Heart left ventricle (tissue), 16 donors: ENCODE measurements at regions of chr9 and their contacts with region 1.

Region 1: GRCh38 chr9:121545875-121546423 is 46.3 kb upstream of the GGTA1 start:
- DNase-seq: peak; percentile 95 to 99 (median 98)
- ATAC-seq: peak; percentile 88 to 93 (median 92)
- H3K4me3 ChIP-seq: peak overlapping the region in 10 of 12 donors; percentile 15 to 48 (median 24)
- H3K27ac ChIP-seq: peak overlapping the region in 4 of 12 donors; percentile 32 to 62 (median 50)
- H3K4me1 ChIP-seq: peaks cover 0 to 25% (median 15%) of the 10 kb centered on the region in 12 donors
- H3K27me3 ChIP-seq: no peaks in the 10 kb centered on the region
- CTCF ChIP-seq: peak; percentile 91 to 98 (median 96)
- POLR2A ChIP-seq: peak in 1 of 2 donors; percentile 23

Region 2: GRCh38 chr9:120892748-120893610 is 653.0 kb before region 1 on chr9:
- intact Hi-C with region 1: no loop called
- DNase-seq: no peak
- ATAC-seq: no peak
- H3K4me3 ChIP-seq: no peak overlapping the region
- H3K27ac ChIP-seq: peak overlapping the region in 1 of 12 donors; percentile 78
- H3K4me1 ChIP-seq: peaks cover 3 to 43% (median 15%) of the 10 kb centered on the region in 12 donors
- H3K27me3 ChIP-seq: no peaks in the 10 kb centered on the region
- CTCF ChIP-seq: no peak
- POLR2A ChIP-seq: no peak

Region 3: DNA sequence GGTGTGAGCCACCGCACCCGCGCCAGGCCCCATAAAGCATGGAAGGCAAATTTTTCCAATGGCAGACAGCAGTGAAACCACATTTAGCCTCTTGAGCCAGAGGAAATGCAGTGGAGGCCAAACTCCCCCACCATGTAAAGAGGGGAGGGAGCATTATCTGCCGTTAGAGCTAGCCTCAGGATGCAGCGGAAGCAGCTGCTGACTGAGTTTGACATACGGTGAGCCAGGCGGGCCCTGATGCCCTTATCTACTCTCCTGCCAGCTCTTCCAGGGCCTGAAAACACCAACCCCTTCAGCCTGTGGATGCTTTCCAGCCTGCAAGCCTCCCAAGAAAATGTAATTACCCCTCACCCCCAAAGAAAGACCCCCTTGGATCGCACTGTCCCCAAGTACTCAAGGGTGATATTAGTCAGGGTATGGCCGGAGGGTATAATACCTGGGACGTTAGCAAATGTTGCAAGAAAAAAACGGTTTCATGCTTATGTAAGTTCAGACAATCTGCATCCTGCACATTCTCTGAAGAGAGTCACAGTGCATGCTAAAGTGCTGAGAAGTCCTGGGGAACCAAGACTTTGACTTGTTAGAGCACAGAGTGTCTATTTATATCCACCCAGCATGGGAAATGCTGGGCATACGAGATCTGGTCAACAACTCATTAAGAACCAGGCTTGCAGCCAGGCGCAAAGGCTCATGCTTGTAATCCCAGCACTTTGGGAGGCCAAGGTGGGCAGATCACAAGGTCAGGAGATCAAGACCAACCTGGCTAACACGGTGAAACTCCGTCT is 35.0 kb before region 1 on chr9:
- intact Hi-C with region 1: no loop called
- DNase-seq: peak in 3 of 5 donors; percentile 41 to 79 (median 54)
- ATAC-seq: peak; percentile 79 to 89 (median 88)
- H3K4me3 ChIP-seq: no peak overlapping the region
- H3K27ac ChIP-seq: peak overlapping the region in 11 of 12 donors; percentile 38 to 74 (median 59)
- H3K4me1 ChIP-seq: peaks cover 0 to 41% (median 12%) of the 10 kb centered on the region in 12 donors
- H3K27me3 ChIP-seq: no peaks in the 10 kb centered on the region
- CTCF ChIP-seq: no peak
- POLR2A ChIP-seq: no peak

Region 4: DNA sequence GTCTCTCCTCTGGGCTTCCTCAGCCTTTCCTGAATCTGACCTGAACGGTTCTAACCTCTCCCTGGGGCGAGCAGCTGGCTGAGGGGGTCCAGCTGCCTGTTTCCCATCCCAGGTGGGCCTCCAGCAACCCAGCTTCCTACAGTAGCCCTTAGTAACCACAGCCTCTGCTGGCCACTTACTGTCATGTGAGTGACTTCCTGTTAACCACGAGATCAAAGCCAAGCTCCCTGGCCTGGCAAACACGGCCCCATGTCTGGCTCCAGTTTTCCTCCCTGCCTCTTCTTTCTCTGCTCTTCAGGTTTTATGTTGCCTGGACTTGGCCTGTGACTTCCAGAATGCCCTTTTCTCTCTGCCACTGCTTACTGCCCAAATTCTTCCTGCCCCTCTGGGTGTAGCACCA is 58.3 kb after region 1 on chr9:
- intact Hi-C with region 1: loop called in 6 of 10 experiments (anchors 5 kb)
- DNase-seq: peak in 2 of 5 donors; percentile 44 to 55
- ATAC-seq: peak in 1 of 4 donors; percentile 35
- H3K4me3 ChIP-seq: no peak overlapping the region
- H3K27ac ChIP-seq: peak overlapping the region in 11 of 12 donors; percentile 18 to 75 (median 61)
- H3K4me1 ChIP-seq: peaks cover 24 to 83% (median 69%) of the 10 kb centered on the region in 12 donors
- H3K27me3 ChIP-seq: peaks cover 0 to 13% (median 0%) of the 10 kb centered on the region in 9 donors
- CTCF ChIP-seq: no peak
- POLR2A ChIP-seq: no peak

Region 5: DNA sequence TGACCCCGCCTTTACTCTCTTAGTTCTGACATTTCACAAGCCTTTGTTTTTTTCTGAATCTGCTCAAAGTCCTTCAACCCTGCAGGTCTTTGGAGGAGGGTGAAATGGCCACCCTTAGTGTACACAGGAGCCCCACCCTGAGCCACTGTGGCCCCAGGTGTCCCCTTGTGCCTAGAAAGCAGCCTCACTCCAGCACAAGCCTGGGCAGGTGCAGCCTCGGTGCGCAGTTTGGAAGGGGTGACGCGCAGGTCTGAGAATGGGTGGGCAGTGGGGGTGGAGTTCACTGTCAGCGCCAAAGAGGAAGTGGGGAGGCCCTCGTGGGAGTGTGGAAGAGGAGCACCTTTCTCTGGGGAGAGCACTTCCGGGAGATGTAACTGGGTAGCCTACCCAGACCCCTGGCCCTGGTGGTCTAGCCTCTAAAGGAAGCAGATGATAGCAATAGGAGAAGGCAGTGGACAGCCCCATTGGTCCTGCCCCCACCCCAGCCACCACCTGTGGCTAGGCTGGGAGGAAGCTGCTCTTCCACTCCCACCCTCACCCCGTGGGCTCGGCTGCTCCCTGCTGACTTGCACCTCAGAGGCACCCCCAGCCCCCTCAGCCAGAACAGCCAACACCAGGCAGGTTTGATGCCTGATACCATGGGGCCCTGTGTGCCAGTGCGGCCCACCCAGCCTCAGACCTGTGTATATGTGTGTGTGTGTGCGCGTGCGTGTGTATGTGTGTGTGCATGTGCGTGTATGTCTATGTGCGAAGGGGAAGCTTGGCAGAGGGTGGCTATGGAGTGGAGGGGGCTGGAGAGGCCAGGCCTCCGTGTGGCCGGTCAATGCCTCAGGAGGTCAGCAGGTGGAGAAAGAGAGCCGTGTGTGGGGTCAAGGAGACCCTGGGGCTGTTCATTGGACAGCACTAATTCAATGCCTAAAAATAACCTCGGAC is 88.6 kb after region 1 on chr9:
- intact Hi-C with region 1: loop called in 2 of 10 experiments (anchors 5 kb)
- DNase-seq: no peak
- ATAC-seq: peak; percentile 60 to 79 (median 64)
- H3K4me3 ChIP-seq: no peak overlapping the region
- H3K27ac ChIP-seq: peak overlapping the region in 5 of 12 donors; percentile 6 to 66 (median 34)
- H3K4me1 ChIP-seq: peaks cover 15 to 60% (median 43%) of the 10 kb centered on the region in 12 donors
- H3K27me3 ChIP-seq: no peaks in the 10 kb centered on the region
- CTCF ChIP-seq: peak; percentile 35 to 74 (median 62)
- POLR2A ChIP-seq: no peak

Region 6: DNA sequence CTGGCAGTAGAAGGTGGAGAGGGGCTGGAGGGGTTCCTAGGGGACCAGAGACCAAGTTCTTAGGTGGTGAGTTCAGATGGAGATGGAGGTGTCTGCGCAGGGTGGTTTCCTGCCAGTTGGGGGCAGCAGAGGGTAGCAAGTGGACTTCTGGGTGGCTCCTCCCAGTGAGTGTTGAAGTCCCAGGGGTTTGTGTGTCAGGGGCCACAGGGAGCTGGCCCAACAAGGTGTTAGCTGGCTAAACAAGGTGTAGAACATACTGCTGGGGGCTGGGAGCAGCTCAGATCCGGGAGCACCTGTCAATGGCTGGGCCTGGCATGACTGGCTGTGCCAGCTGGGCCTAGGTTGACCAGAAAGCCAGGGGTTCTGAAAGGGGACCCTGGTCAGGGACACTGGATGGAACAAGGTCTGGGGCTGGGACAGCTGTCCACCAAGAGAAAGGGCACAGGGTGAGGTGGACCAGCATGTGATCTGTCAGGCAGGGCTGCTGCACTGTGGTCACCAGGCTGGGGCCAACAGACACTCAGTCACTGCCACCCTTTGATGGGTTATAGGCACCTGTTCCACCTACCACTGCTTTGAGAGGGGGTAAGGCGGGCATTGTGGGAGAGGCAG is 141.1 kb after region 1 on chr9:
- intact Hi-C with region 1: loop called in 7 of 10 experiments (anchors 2 to 10 kb)
- DNase-seq: peak in 4 of 5 donors; percentile 71 to 84 (median 76)
- ATAC-seq: peak; percentile 56 to 72 (median 62)
- H3K4me3 ChIP-seq: no peak overlapping the region
- H3K27ac ChIP-seq: peak overlapping the region in 4 of 12 donors; percentile 14 to 42 (median 36)
- H3K4me1 ChIP-seq: peaks cover 3 to 68% (median 28%) of the 10 kb centered on the region in 12 donors
- H3K27me3 ChIP-seq: no peaks in the 10 kb centered on the region
- CTCF ChIP-seq: peak; percentile 70 to 91 (median 82)
- POLR2A ChIP-seq: no peak

Region 7: DNA sequence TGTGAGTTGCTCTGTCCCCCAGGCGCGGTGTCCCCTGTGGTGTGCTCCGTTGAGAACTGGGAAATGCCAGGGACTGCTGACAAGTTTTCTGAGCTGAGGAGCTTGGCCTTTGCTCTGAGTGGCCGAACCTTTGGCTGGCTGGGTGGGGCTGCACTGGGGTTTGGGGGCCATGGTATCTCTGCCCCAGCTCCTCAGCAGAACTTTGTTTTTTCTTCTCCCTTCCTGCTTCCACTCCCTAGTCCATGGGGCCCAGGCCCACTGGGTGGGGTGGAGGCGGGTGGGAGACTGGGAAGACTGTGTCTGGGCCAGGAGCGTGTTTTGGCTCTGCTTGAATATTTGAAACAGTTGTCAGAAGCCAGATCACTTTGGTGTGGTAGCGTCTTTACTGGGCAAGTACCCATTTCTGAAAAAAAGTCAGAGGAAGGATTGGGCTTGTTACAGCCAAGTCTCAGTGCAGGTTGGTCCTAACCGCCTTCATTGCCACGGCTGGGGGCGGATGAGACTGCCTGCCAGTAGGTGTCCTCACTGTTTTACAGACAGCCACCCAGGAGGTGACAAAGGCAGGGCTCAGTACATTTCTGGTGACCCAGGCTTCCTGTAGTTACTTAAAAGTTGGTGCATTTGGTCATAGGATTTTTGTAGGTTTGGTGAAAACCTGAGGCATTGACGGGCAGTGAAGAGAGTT is 198.2 kb after region 1 on chr9:
- intact Hi-C with region 1: loop called in 4 of 10 experiments (anchors 5 to 10 kb)
- DNase-seq: peak in 4 of 5 donors; percentile 70 to 79 (median 75)
- ATAC-seq: peak; percentile 61 to 72 (median 63)
- H3K4me3 ChIP-seq: peak overlapping the region; percentile 15 to 75 (median 56)
- H3K27ac ChIP-seq: peak overlapping the region; percentile 87 to 99 (median 94)
- H3K4me1 ChIP-seq: peaks cover 23 to 99% (median 94%) of the 10 kb centered on the region in 12 donors
- H3K27me3 ChIP-seq: no peaks in the 10 kb centered on the region
- CTCF ChIP-seq: peak; percentile 18 to 78 (median 55)
- POLR2A ChIP-seq: no peak

Region 8: GRCh38 chr9:121861501-121862180 is 315.7 kb after region 1 on chr9:
- intact Hi-C with region 1: loop called in 6 of 10 experiments (anchors 5 to 10 kb)
- DNase-seq: peak; percentile 38 to 71 (median 61)
- ATAC-seq: peak; percentile 68 to 87 (median 82)
- H3K4me3 ChIP-seq: no peak overlapping the region
- H3K27ac ChIP-seq: no peak overlapping the region
- H3K4me1 ChIP-seq: peaks cover 0 to 19% (median 11%) of the 10 kb centered on the region in 12 donors
- H3K27me3 ChIP-seq: no peaks in the 10 kb centered on the region
- CTCF ChIP-seq: peak; percentile 32 to 74 (median 62)
- POLR2A ChIP-seq: no peak

Region 9: GRCh38 chr9:122350638-122351355 is 804.8 kb after region 1 on chr9:
- intact Hi-C with region 1: loop called in 1 of 10 experiments (anchors 10 kb)
- DNase-seq: peak; percentile 76 to 92 (median 78)
- ATAC-seq: peak; percentile 81 to 89 (median 83)
- H3K4me3 ChIP-seq: no peak overlapping the region
- H3K27ac ChIP-seq: no peak overlapping the region
- H3K4me1 ChIP-seq: peaks cover 0 to 28% (median 17%) of the 10 kb centered on the region in 12 donors
- H3K27me3 ChIP-seq: peaks cover 0 to 5% (median 0%) of the 10 kb centered on the region in 9 donors
- CTCF ChIP-seq: peak; percentile 94 to 99 (median 96)
- POLR2A ChIP-seq: no peak